Ascending aorta (tissue), 2 donors: ENCODE measurements at regions of chr11 and their contacts with region 1.

Region 1: DNA sequence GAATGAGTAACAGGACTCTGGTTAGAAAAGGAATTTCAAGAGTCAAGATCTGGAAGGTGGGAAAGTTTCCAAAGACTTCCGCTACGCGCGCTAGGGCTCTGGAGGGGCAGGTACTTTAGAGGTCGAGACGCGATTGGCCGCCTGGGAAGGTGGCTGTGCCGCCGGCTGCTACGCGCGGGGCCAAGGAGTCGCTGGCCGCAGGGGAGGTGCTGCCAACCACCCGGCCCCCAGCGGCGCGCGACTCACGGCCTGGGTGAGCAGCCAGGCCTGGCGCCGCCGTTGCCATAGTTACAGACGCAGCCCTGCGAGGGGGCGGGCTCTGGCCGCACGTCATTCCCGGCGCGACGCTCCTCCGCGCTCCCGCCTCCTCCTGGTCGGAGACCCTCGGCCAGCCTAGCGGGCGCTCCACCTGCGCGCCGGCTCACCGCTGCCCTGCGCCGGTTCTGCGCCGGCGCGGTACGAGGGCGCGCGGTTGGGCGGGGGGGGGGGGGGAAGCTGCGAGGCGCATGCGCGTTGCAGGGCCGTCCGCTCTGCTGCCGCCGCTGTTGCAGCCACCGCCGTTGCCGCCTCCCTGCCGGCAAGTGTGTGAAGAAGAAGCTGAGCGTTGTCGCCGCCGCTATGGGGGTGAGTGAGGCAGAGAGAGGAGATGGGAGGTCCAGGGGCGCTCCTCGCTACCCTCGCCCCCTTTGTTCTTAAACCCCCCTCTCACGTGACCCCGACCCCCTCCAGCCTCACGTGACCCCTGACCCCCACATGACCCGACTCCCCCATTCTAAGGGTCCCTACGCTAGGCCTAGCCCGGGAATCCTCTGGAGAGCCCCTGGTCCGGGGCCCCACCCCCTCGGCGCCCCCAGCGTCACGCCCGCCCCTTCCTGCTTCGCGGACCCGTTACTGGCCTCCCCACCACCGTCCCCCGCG is at the start of gene NAA40:
- DNase-seq: peak; percentile 72 to 96
- H3K4me3 ChIP-seq: peak within 1 kb of the TSS; percentile 68 to 83
- H3K27ac ChIP-seq: peak within 1 kb of the TSS; percentile 24 to 49
- H3K4me1 ChIP-seq: peaks cover 4 to 7% of the 10 kb centered on the region in 2 donors
- H3K27me3 ChIP-seq: no peaks in the 10 kb centered on the region
- CTCF ChIP-seq: no peak
- total RNA-seq, gene NAA40: 3.1 TPM

Region 2: DNA sequence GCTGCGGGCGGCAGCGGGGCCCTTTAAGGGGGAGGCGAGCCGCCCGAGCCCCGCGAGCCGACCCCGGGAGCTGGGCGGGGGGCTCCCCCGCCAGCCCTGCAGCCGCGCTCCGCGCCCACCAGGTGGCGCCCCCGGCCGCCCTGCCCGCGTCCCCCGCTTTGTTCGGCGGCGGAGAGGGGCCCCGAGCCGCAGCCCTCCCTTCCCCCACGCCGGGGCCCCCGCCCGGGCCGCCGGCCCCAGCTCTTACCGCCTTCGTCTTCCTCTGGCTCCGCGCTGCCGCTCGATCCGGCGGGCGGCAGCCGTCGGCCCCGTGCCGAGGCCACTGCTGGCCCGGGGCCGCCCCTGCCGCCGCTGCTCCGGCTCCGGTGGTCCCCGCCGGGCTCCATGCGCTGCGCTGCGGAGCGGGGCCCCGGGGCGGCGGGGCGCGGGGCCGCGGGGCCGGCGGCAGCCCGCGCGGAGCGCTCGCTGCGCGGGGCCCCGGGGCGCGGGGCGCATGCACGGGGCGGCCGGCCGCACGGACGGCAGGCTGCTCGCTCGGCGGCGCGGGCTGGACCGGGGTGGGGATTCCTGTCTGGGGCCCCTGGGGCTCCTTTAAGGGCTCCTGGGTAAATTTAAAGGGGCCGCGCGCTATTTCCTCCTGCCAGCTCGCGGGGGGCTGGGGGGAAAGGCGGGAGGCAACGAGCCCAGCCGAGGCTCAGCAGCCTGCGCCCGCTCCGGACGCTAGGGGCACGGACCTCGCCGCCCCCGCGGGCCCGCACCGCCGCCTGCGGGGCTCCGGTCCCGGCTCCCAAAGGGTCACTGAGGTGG is 170.3 kb before region 1 on chr11 and contains the start of gene ZFTA:
- intact Hi-C with region 1: loop called (anchors 2 kb)
- DNase-seq: peak in 1 of 2 donors; percentile 80
- H3K4me3 ChIP-seq: peak within 1 kb of the TSS; percentile 96 to 98
- H3K27ac ChIP-seq: peak within 1 kb of the TSS; percentile 73 to 89
- H3K4me1 ChIP-seq: peaks cover 6 to 7% of the 10 kb centered on the region in 2 donors
- H3K27me3 ChIP-seq: no peaks in the 10 kb centered on the region
- CTCF ChIP-seq: peak in 2 of 3 experiments; percentile 8 to 94
- total RNA-seq, gene ZFTA: 34.7 TPM

Region 3: DNA sequence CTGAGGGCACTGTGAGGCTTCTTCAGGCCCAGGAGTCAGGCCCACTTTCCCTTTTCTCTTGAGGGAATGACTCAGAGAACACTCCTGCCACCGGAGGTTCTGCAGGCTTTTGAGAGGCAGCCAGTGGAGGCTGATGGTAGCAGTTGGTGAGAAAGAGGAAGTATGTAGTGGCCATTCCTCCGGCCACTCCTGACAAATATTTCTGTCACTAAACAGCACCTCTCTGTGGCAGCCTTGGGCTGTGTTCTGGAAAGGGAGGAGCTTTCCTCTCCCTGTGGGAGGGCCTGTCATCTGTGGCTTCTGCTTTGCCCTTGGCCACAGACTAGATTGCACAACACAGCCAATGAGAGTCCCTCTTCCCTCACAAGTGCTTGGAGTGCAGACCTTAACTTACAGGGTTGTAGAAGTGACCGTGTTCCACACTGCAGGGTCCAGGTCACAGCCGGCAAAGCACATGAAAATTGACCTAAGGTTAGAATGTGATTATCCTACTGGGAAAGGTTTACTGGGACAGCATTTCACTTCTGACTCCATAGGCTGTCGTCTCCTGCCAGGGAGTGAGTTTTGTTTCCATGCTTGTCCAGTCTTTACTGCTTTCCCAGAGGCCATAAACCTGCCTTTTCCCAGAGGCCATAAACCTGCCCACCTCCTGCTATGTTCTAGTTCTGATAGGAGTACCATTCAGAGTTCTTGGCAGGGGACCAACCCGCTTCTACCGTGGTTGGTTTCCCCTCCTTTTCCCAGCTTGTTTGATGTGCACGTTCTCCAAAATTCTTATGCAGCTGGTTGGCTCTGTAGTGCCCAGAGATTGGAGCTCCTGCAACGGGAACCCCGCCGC is 66.6 kb before region 1 on chr11:
- intact Hi-C with region 1: loop called (anchors 2 kb)
- DNase-seq: peak; percentile 72 to 95
- H3K4me3 ChIP-seq: peak overlapping the region in 1 of 2 donors; percentile 1
- H3K27ac ChIP-seq: peak overlapping the region; percentile 38 to 48
- H3K4me1 ChIP-seq: peaks cover 20 to 54% of the 10 kb centered on the region in 2 donors
- H3K27me3 ChIP-seq: no peaks in the 10 kb centered on the region
- CTCF ChIP-seq: peak; percentile 44 to 61 (median 50)

Region 4: GRCh38 chr11:63888170-63889086 is 50.3 kb before region 1 on chr11:
- intact Hi-C with region 1: no loop called
- DNase-seq: peak; percentile 25 to 83
- H3K4me3 ChIP-seq: peak overlapping the region; percentile 34 to 63
- H3K27ac ChIP-seq: peak overlapping the region; percentile 73 to 76
- H3K4me1 ChIP-seq: peaks cover 8 to 23% of the 10 kb centered on the region in 2 donors
- H3K27me3 ChIP-seq: no peaks in the 10 kb centered on the region
- CTCF ChIP-seq: no peak

Region 5: GRCh38 chr11:63916837-63917691 is 21.7 kb before region 1 on chr11 and contains the start of gene RCOR2:
- intact Hi-C with region 1: loop called (anchors 1 kb)
- DNase-seq: peak in 1 of 2 donors; percentile 85
- H3K4me3 ChIP-seq: peak within 1 kb of the TSS; percentile 63 to 67
- H3K27ac ChIP-seq: peak within 1 kb of the TSS; percentile 90 to 92
- H3K4me1 ChIP-seq: peaks cover 23 to 41% of the 10 kb centered on the region in 2 donors
- H3K27me3 ChIP-seq: no peaks in the 10 kb centered on the region
- CTCF ChIP-seq: no peak
- total RNA-seq, gene RCOR2: not detected

Region 6: GRCh38 chr11:63974259-63975143 is 35.8 kb after region 1 on chr11 and contains the start of gene COX8A:
- intact Hi-C with region 1: loop called (anchors 2 kb)
- DNase-seq: peak; percentile 96 to 99
- H3K4me3 ChIP-seq: peak within 1 kb of the TSS; percentile 94 to 96
- H3K27ac ChIP-seq: peak within 1 kb of the TSS; percentile 96
- H3K4me1 ChIP-seq: peaks cover 14 to 15% of the 10 kb centered on the region in 2 donors
- H3K27me3 ChIP-seq: no peaks in the 10 kb centered on the region
- CTCF ChIP-seq: no peak
- total RNA-seq, gene COX8A: 520 TPM